GM10248 (cell line): ENCODE measurements at regions of chr4 and their contacts with region 1.

Region 1: GRCh38 chr4:119490335-119490734 is 138.3 kb downstream of the PDE5A start:
- DNase-seq: no peak
- CTCF ChIP-seq: peak; percentile 14

Region 2: GRCh38 chr4:119314356-119314755 is 176.0 kb before region 1 on chr4:
- CTCF ChIA-PET with region 1: interaction called, 15 read pairs
- POLR2A ChIA-PET with region 1: no interaction called
- DNase-seq: peak; percentile 12
- CTCF ChIP-seq: peak; percentile 43

Region 3: GRCh38 chr4:119478446-119479179 is 11.7 kb before region 1 on chr4:
- CTCF ChIA-PET with region 1: interaction called, 20 read pairs
- POLR2A ChIA-PET with region 1: interaction called, 4 read pairs
- DNase-seq: no peak
- CTCF ChIP-seq: no peak